ENCODE measurements at regions of chr9 and their contacts with region 1.

Region 1: DNA sequence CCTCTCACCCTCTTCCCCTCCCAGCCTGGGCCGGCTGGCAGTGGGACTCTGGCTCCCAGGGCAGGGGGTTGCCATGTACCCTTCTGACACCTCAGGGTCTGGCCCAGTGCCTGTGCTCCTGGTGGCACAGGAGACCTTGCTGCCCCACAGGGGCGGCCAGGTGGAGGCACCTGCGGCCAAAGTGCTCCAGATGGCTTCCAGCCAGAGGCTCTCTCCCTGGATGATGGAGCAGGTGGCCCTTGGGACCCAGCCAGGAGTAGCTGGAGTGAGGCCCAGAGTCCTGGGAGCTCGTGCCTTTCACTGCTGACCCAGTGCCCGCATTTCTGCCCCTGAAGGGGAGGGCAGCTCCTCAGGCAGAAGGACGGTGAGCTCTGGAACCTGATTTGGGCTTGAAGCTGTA is 87.3 kb downstream of the NTNG2 start:
- DNase-seq: no peak
- ATAC-seq: no peak
- H3K4me3 ChIP-seq: no peak overlapping the region
- H3K4me3 Mint-ChIP-seq: no peak overlapping the region
- H3K27ac ChIP-seq: no peak overlapping the region
- H3K27ac Mint-ChIP-seq: no peak overlapping the region
- H3K4me1 ChIP-seq: peaks cover 0 to 3% of the 10 kb centered on the region in 2 donors
- H3K4me1 Mint-ChIP-seq: peaks cover 5% of the 10 kb centered on the region
- H3K27me3 ChIP-seq: peaks cover 0 to 11% (median 4%) of the 10 kb centered on the region in 4 experiments
- H3K27me3 Mint-ChIP-seq: peaks cover 5% of the 10 kb centered on the region
- CTCF ChIP-seq: no peak

Region 2: GRCh38 chr9:131755541-131756198 is 493.5 kb before region 1 on chr9:
- CTCF ChIA-PET with region 1: interaction called, 20 read pairs
- POLR2A ChIA-PET with region 1: no interaction called
- intact Hi-C with region 1: no loop called
- DNase-seq: peak; percentile 90
- ATAC-seq: peak; percentile 100
- H3K4me3 ChIP-seq: no peak overlapping the region
- H3K4me3 Mint-ChIP-seq: no peak overlapping the region
- H3K27ac ChIP-seq: no peak overlapping the region
- H3K27ac Mint-ChIP-seq: peak overlapping the region; percentile 70
- H3K4me1 ChIP-seq: peaks cover 6 to 8% of the 10 kb centered on the region in 2 donors
- H3K4me1 Mint-ChIP-seq: peaks cover 8% of the 10 kb centered on the region
- H3K27me3 ChIP-seq: peaks cover 0 to 7% (median 2%) of the 10 kb centered on the region in 4 experiments
- H3K27me3 Mint-ChIP-seq: peaks cover 7% of the 10 kb centered on the region
- CTCF ChIP-seq: peak; percentile 83

Region 3: DNA sequence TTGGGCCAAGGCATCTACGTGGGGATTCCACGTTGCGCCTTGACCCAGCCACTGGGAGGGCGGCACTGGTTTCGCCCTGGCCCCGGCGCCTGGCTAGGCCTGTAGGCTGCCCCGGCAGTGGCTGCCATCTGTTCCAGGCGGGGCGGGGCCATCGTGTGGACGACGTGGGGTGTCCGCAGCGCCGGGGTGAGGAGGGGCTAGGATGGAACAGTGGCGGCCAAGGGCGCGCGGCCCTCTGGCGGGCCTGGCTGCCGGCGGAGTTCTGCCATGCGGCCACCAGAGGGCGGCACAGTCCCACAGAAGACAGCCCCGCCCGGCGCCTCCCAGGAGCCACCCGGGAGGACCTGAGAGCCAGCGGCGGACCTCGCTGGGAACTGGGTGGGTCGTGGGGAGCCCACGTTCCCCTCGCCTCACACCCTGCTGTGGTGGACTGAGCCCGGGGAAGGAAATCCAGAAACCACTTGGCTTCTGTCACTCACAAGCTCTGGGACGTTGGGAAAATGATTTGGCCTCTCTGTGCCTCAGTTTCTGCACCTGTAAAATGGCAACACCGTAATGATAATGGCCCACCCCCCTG is 486.7 kb before region 1 on chr9:
- CTCF ChIA-PET with region 1: interaction called, 44 read pairs
- POLR2A ChIA-PET with region 1: no interaction called
- intact Hi-C with region 1: no loop called
- DNase-seq: peak; percentile 82
- ATAC-seq: peak; percentile 99
- H3K4me3 ChIP-seq: no peak overlapping the region
- H3K4me3 Mint-ChIP-seq: no peak overlapping the region
- H3K27ac ChIP-seq: no peak overlapping the region
- H3K27ac Mint-ChIP-seq: no peak overlapping the region
- H3K4me1 ChIP-seq: peaks cover 6 to 8% of the 10 kb centered on the region in 2 donors
- H3K4me1 Mint-ChIP-seq: peaks cover 3% of the 10 kb centered on the region
- H3K27me3 ChIP-seq: peaks cover 0 to 15% (median 3%) of the 10 kb centered on the region in 4 experiments
- H3K27me3 Mint-ChIP-seq: peaks cover 11% of the 10 kb centered on the region
- CTCF ChIP-seq: peak; percentile 97

Region 4: GRCh38 chr9:132169672-132170392 is 79.3 kb before region 1 on chr9:
- CTCF ChIA-PET with region 1: interaction called, 102 read pairs
- POLR2A ChIA-PET with region 1: no interaction called
- intact Hi-C with region 1: loop called (anchors 1 kb)
- DNase-seq: peak; percentile 75
- ATAC-seq: peak; percentile 49
- H3K4me3 ChIP-seq: no peak overlapping the region
- H3K4me3 Mint-ChIP-seq: no peak overlapping the region
- H3K27ac ChIP-seq: no peak overlapping the region
- H3K27ac Mint-ChIP-seq: no peak overlapping the region
- H3K4me1 ChIP-seq: peaks cover under 1 to 2% of the 10 kb centered on the region in 2 donors
- H3K4me1 Mint-ChIP-seq: peaks cover under 1% of the 10 kb centered on the region
- H3K27me3 ChIP-seq: peaks cover 0 to 43% (median 17%) of the 10 kb centered on the region in 4 experiments
- H3K27me3 Mint-ChIP-seq: peaks cover 63% of the 10 kb centered on the region
- CTCF ChIP-seq: peak; percentile 95

Region 5: GRCh38 chr9:132268725-132269352 is 19.7 kb after region 1 on chr9:
- CTCF ChIA-PET with region 1: interaction called, 23 read pairs
- POLR2A ChIA-PET with region 1: no interaction called
- intact Hi-C with region 1: no loop called
- DNase-seq: peak; percentile 77
- ATAC-seq: peak; percentile 51
- H3K4me3 ChIP-seq: no peak overlapping the region
- H3K4me3 Mint-ChIP-seq: no peak overlapping the region
- H3K27ac ChIP-seq: no peak overlapping the region
- H3K27ac Mint-ChIP-seq: peak overlapping the region; percentile 64
- H3K4me1 ChIP-seq: no peaks in the 10 kb centered on the region
- H3K4me1 Mint-ChIP-seq: peaks cover 2% of the 10 kb centered on the region
- H3K27me3 ChIP-seq: no peaks in the 10 kb centered on the region
- H3K27me3 Mint-ChIP-seq: no peaks in the 10 kb centered on the region
- CTCF ChIP-seq: peak; percentile 96